Right ventricle myocardium superior (tissue), 1 donor: ENCODE measurements at regions of chrX and their contacts with region 1.

Region 1: DNA sequence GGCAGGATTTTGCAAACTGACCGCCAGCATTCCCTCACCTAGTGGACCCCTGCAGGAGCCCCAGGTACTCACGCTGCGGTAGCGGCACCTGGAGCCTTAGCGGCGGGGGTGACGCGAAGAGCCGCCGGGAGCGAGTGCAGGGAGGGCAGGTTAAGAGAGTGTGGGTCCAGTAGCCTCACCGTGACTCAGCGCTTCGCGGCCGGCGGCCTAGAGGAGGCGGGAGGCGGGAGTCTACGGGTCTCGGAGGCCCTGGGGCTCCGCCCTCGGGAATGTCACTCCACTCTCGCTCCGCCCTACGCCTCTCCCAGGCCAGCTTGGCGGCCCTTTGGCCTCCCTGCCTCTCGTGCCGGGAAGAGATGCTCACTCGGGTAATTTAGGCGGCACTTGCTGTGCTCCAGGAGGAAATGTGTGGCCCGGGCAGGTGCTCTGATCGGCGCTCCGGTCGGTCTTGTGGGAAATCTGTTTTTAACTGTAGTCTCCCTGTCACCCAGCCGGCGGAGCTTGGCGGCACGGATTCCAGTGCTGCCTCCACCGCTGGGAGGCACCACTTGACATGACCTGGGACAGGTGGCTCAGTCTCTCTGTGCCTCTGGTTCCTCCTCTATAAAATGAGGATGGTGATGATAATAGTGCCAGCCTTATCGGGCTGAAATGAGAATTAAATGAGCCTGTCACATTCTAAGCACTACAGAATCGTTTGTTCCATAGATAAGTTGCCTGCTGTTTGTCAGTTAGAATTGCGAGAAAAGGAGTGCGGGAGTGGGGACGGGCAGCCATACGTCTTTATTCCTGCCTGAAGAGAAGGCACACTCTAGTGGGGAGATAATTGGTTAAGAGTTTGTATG is at the start of gene PIR:
- DNase-seq: peak; percentile 91
- ATAC-seq: peak; percentile 99
- total RNA-seq, gene PIR: 10.8 TPM

Region 2: DNA sequence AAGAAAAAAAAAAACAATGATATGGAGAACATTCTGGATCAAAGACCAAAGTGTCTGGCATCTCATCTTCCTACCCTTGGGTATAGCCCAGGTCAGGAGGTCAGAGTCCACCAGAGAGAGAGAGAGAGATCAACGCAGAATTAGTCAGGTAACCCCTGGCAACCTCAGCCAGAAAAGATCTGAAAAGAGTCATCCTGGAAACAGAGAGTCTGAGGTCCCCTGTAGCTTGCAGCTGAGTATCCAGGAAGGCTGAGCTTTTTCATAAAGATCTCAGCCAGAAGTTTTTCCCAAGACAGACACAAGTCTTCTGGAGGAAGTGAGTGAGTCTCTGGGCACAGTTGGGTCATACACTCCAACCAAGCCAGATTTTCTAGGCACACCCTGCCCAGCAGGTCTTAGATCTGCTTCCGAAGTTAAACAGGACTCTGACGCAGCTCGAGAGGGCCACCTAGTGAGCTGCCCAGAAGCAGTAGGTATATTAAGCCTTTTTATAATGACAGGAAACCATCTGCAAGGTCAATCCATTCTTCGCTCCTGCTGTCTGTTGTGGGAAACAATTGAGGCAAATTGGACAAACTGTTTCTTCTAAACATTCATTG is 71.7 kb after region 1 on chrX:
- intact Hi-C with region 1: loop called (anchors 10 kb)
- DNase-seq: peak; percentile 66
- ATAC-seq: peak; percentile 89